Cardiac septum (tissue), 1 donor: ENCODE measurements at regions of chr10 and their contacts with region 1.

Region 1: DNA sequence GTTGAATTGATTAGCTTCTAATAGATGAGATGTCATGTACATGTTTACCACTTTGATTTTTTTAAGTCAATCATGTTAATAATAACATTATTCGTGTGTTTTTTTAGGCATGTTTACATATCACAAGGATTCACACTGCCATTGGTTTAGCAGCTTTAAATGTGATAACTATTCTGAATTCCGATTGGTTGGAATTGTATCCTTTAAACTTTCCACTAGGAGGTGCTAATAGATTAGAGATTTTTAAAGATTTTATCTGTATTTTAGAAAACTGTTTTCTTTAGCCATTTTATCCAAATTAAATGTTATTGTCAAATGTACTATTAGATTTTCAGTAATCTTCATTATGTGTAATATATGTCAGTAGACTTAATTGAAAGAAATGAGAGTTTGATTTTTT is 83.2 kb downstream of the HECTD2 start:
- DNase-seq: no peak

Region 2: GRCh38 chr10:91541481-91541880 is 48.2 kb after region 1 on chr10:
- intact Hi-C with region 1: loop called (anchors 5 kb)
- DNase-seq: no peak